Pancreas (tissue), 10 donors: ENCODE measurements at regions of chr19 and their contacts with region 1.

Region 1: DNA sequence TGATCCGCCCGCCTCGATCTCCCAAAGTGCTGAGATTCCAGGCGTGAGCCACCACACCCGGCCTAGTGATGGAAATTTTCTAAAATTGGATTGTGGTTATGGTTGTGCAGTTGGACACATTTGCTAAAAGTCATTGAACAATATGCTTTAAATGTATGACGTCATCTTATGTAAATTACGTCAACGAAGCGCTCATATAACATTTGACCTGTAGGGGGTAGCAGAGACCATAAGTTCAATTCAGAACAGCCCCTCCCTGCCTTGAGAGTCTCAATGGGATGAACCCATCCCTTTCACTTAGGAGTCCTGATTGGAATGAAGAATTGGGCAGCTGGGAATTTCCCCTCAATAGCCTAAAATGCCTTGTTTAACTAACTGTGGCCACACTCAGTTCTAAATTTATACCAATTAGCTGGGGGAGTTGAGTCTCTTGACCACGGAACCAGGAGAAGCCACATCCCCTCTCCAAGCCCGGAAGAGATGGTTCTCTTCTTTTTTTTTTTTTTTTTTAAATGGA is 15.3 kb upstream of the TLE6 start:
- DNase-seq: peak in 1 of 6 donors; percentile 65
- ATAC-seq: peak; percentile 59 to 97 (median 84)
- H3K4me3 ChIP-seq: peak overlapping the region in 1 of 4 donors; percentile 26
- H3K27ac ChIP-seq: no peak overlapping the region
- H3K4me1 ChIP-seq: no peaks in the 10 kb centered on the region
- H3K27me3 ChIP-seq: no peaks in the 10 kb centered on the region
- CTCF ChIP-seq: peak; percentile 42 to 76 (median 54)

Region 2: DNA sequence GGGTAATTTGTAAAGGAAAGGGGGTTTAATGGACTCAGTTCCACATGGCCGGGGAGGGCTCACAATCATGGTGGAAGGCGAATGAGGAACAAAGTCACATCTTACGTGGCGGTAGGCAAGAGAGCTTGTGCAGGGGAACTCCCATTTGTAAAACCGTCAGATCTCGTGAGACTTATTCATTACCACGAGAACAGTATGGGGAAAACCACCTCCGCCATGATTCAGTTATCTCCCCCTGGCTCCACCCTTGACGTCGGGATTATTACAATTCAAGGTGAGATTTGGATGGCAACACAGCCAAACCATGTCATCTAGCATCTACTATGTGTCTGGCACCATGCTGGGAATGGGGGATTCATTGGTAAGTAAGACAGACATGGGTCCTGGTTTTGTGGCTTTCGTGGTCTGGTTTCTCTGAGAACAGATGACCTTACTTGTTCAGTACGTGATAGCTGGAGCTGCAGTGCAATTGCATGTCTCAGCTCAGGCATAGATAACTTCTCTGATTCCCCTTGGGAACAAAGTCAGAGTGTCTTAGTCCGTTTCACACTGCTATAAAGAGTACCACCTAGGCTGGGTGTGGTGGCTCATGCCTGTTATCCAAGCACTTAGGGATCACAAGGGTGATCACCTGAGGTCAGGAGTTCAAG is 134.1 kb before region 1 on chr19:
- intact Hi-C with region 1: no loop called
- DNase-seq: no peak
- ATAC-seq: no peak
- H3K4me3 ChIP-seq: no peak overlapping the region
- H3K27ac ChIP-seq: no peak overlapping the region
- H3K4me1 ChIP-seq: no peaks in the 10 kb centered on the region
- H3K27me3 ChIP-seq: no peaks in the 10 kb centered on the region
- CTCF ChIP-seq: no peak

Region 3: GRCh38 chr19:3108775-3109174 is 146.7 kb after region 1 on chr19:
- intact Hi-C with region 1: loop called in 2 of 3 experiments (anchors 5 to 10 kb)
- DNase-seq: peak in 1 of 6 donors; percentile 61
- ATAC-seq: peak; percentile 33 to 71 (median 60)
- H3K4me3 ChIP-seq: no peak overlapping the region
- H3K27ac ChIP-seq: no peak overlapping the region
- H3K4me1 ChIP-seq: peaks cover 0 to 1% (median under 1%) of the 10 kb centered on the region in 3 donors
- H3K27me3 ChIP-seq: no peaks in the 10 kb centered on the region
- CTCF ChIP-seq: peak; percentile 63 to 84 (median 74)

Region 4: GRCh38 chr19:3146677-3147100 is 184.6 kb after region 1 on chr19:
- intact Hi-C with region 1: no loop called
- DNase-seq: peak in 1 of 6 donors; percentile 45
- ATAC-seq: peak in 2 of 4 donors; percentile 30 to 32
- H3K4me3 ChIP-seq: no peak overlapping the region
- H3K27ac ChIP-seq: no peak overlapping the region
- H3K4me1 ChIP-seq: no peaks in the 10 kb centered on the region
- H3K27me3 ChIP-seq: no peaks in the 10 kb centered on the region
- CTCF ChIP-seq: peak; percentile 24 to 47 (median 40)